CD4-positive, alpha-beta T cell (primary cell): ENCODE measurements at regions of chr11 and their contacts with region 1.

Region 1: GRCh38 chr11:6389921-6390724 is at the start of gene SMPD1:
- DNase-seq: peak; percentile 85 to 98 (median 94)
- ATAC-seq: peak; percentile 82
- H3K4me3 ChIP-seq: peak within 1 kb of the TSS; percentile 95
- H3K4me3 Mint-ChIP-seq: peak within 1 kb of the TSS; percentile 90
- H3K27ac ChIP-seq: peak within 1 kb of the TSS; percentile 87 to 93
- H3K27ac Mint-ChIP-seq: peak within 1 kb of the TSS; percentile 93
- H3K4me1 ChIP-seq: peaks cover 54% of the 10 kb centered on the region
- H3K4me1 Mint-ChIP-seq: peaks cover 75% of the 10 kb centered on the region
- H3K27me3 ChIP-seq: no peaks in the 10 kb centered on the region
- H3K27me3 Mint-ChIP-seq: no peaks in the 10 kb centered on the region
- CTCF ChIP-seq: no peak
- total RNA-seq, gene SMPD1: 70.9 to 75.0 TPM

Region 2: DNA sequence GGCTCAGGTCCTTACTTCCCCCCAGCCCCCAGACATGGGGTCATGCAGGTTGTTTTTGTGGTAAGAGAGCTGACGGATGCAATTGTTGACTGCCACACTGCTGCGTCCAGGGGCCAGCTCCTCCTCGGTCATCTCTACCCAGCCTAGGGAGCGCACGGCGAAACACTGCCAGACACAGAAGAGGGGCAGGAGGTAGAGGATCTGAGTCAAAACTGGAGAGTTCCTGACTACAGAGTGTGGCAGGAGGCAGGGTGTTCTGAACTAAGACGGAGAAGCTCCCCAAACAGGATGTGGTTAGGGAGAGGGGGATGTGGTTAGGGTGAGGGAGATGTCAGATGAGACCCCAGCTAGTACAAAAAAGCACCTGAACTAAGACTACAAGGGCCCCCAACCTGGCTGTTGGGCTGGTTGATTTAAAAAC is 12.4 kb after region 1 on chr11:
- CTCF ChIA-PET with region 1: interaction called, 7 read pairs
- POLR2A ChIA-PET with region 1: interaction called, 253 read pairs
- intact Hi-C with region 1: loop called (anchors 1 kb)
- DNase-seq: peak; percentile 43 to 95 (median 72)
- ATAC-seq: peak; percentile 78
- H3K4me3 ChIP-seq: peak overlapping the region; percentile 31
- H3K4me3 Mint-ChIP-seq: peak overlapping the region; percentile 84
- H3K27ac ChIP-seq: peak overlapping the region; percentile 75 to 91
- H3K27ac Mint-ChIP-seq: peak overlapping the region; percentile 97
- H3K4me1 ChIP-seq: peaks cover 83% of the 10 kb centered on the region
- H3K4me1 Mint-ChIP-seq: peaks cover 96% of the 10 kb centered on the region
- H3K27me3 ChIP-seq: no peaks in the 10 kb centered on the region
- H3K27me3 Mint-ChIP-seq: no peaks in the 10 kb centered on the region
- CTCF ChIP-seq: no peak

Region 3: DNA sequence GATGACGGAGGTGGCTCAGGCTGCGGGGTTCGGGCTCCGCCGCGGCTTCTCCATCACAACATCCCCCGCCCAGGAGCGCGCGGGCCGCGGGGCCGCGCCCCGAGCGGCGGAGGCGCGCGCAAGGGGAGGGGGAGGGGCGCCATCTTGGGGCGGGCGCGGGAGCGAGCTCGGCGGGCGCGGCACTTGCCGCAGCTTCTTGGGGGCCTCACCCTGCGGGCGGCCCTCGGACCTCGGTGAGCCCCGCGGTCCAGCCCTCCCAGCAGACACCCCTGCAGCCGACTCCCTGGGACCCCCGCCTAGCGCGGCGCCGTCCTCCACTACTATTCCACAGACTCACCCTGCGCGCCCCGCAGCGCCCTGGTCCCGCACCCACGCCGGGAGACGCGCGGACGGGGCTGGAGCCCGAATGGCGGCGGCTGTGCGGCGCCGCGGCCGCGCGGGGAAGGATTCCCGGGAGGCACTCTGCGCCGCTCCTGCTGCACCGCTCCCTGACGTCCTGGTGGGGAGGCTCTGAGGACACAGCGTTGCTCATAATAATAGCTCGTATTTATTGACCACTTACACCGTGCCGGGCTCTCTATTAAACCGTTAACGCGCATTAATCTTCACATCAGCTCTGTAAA is 29.0 kb after region 1 on chr11 and contains the start of gene APBB1:
- CTCF ChIA-PET with region 1: interaction called, 4 read pairs
- POLR2A ChIA-PET with region 1: interaction called, 85 read pairs
- intact Hi-C with region 1: loop called (anchors 1 to 2 kb)
- DNase-seq: peak; percentile 61 to 91 (median 74)
- ATAC-seq: peak; percentile 68
- H3K4me3 ChIP-seq: peak within 1 kb of the TSS; percentile 70
- H3K4me3 Mint-ChIP-seq: peak within 1 kb of the TSS; percentile 91
- H3K27ac ChIP-seq: peak within 1 kb of the TSS; percentile 49 to 92
- H3K27ac Mint-ChIP-seq: peak within 1 kb of the TSS; percentile 89
- H3K4me1 ChIP-seq: peaks cover 49% of the 10 kb centered on the region
- H3K4me1 Mint-ChIP-seq: peaks cover 10% of the 10 kb centered on the region
- H3K27me3 ChIP-seq: no peaks in the 10 kb centered on the region
- H3K27me3 Mint-ChIP-seq: peaks cover 7% of the 10 kb centered on the region
- CTCF ChIP-seq: no peak
- total RNA-seq, gene APBB1: 182 to 184 TPM

Region 4: DNA sequence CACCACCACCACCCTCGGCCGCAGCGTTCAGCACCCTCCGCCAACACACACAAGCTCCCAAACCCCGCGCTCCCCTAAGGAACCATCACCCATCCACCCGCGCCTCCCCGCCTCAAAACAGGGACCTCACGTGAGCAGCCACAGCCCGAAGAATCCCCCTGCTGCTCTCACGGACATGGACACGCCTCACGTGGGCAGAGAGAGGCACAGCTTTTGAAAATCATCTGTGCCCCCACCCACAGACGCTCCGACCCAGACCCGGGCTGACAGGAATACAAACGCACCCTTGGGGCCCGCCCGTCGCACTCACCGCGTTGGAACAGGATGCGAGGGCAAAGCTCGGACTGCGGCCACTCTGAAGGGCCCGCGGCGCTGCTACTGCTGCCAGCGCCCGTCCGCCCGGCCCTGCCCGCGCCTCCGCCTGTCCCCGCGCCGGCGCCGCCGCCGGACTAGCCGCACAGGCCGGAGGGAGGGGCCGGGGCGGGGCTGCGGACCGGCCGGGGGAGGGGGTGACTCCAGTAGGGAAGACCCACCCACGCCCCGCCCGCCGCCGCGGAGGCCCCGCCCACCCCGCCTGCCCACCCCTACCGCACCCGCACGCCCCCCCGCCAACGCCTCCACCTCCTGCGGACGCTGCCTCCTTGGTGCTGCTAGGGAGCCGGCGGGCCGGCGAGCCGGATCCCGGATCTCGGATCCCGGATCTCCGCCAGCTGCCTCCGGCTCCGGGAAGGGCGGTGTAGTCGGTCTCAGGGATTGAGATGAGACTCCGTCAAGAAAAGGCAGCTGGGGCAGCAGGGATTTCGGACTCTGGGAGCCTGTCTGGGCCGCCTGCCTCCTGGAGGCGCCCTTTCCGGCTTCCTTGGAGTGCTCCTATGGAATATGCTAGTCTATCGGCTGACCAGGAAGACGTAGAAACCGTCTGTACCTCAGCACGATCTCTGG is 83.6 kb after region 1 on chr11 and contains the start of gene TRIM3:
- CTCF ChIA-PET with region 1: interaction called, 3 read pairs
- POLR2A ChIA-PET with region 1: interaction called, 5 read pairs
- intact Hi-C with region 1: loop called in 1 of 2 experiments (anchors 2 kb)
- DNase-seq: peak; percentile 36 to 93 (median 69)
- ATAC-seq: peak; percentile 66
- H3K4me3 ChIP-seq: peak within 1 kb of the TSS; percentile 82
- H3K4me3 Mint-ChIP-seq: peak within 1 kb of the TSS; percentile 87
- H3K27ac ChIP-seq: peak within 1 kb of the TSS; percentile 38 to 76
- H3K27ac Mint-ChIP-seq: peak within 1 kb of the TSS; percentile 66
- H3K4me1 ChIP-seq: peaks cover 29% of the 10 kb centered on the region
- H3K4me1 Mint-ChIP-seq: peaks cover 34% of the 10 kb centered on the region
- H3K27me3 ChIP-seq: no peaks in the 10 kb centered on the region
- H3K27me3 Mint-ChIP-seq: no peaks in the 10 kb centered on the region
- CTCF ChIP-seq: no peak
- total RNA-seq, gene TRIM3: 16.4 to 16.6 TPM

Region 5: DNA sequence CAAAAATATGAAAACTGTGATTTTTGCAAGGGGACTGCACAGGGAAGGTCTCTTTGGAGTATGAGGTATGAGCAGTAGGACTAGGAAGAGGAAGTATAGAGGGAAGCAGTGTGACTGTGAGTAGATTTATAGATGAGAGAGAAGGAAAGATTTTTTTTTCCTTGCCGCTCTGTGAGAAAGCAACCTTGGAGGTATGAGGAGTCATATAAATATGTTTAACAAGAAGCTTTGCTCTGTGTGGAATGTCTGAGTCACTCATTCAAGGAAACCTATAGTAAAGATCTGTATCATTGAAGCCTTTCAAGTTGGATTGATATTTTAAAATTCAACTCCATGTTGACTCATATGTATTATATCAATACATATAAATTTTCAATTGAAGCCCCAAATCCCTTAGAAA is 133.1 kb after region 1 on chr11:
- CTCF ChIA-PET with region 1: no interaction called
- POLR2A ChIA-PET with region 1: no interaction called
- intact Hi-C with region 1: no loop called
- DNase-seq: no peak
- ATAC-seq: no peak
- H3K4me3 ChIP-seq: no peak overlapping the region
- H3K4me3 Mint-ChIP-seq: no peak overlapping the region
- H3K27ac ChIP-seq: no peak overlapping the region
- H3K27ac Mint-ChIP-seq: no peak overlapping the region
- H3K4me1 ChIP-seq: peaks cover 4% of the 10 kb centered on the region
- H3K4me1 Mint-ChIP-seq: peaks cover 18% of the 10 kb centered on the region
- H3K27me3 ChIP-seq: no peaks in the 10 kb centered on the region
- H3K27me3 Mint-ChIP-seq: no peaks in the 10 kb centered on the region
- CTCF ChIP-seq: no peak

Region 6: GRCh38 chr11:6603287-6604080 is 213.4 kb after region 1 on chr11 and contains the starts of genes ILK and RRP8:
- CTCF ChIA-PET with region 1: no interaction called
- POLR2A ChIA-PET with region 1: no interaction called
- intact Hi-C with region 1: loop called in 1 of 2 experiments (anchors 5 kb)
- DNase-seq: peak; percentile 73 to 94 (median 83)
- ATAC-seq: peak; percentile 75
- H3K4me3 ChIP-seq: peak within 1 kb of the TSS; percentile 78
- H3K4me3 Mint-ChIP-seq: no peak within 1 kb of the TSS
- H3K27ac ChIP-seq: peak within 1 kb of the TSS; percentile 81 to 87
- H3K27ac Mint-ChIP-seq: no peak within 1 kb of the TSS
- H3K4me1 ChIP-seq: peaks cover 73% of the 10 kb centered on the region
- H3K4me1 Mint-ChIP-seq: peaks cover 22% of the 10 kb centered on the region
- H3K27me3 ChIP-seq: no peaks in the 10 kb centered on the region
- H3K27me3 Mint-ChIP-seq: no peaks in the 10 kb centered on the region
- CTCF ChIP-seq: no peak
- total RNA-seq, gene ILK: 19.2 to 21.0 TPM
- total RNA-seq, gene RRP8: 25.7 to 27.3 TPM